Mucosa of descending colon (tissue), 3 donors: ENCODE measurements at regions of chr7 and their contacts with region 1.

Region 1: DNA sequence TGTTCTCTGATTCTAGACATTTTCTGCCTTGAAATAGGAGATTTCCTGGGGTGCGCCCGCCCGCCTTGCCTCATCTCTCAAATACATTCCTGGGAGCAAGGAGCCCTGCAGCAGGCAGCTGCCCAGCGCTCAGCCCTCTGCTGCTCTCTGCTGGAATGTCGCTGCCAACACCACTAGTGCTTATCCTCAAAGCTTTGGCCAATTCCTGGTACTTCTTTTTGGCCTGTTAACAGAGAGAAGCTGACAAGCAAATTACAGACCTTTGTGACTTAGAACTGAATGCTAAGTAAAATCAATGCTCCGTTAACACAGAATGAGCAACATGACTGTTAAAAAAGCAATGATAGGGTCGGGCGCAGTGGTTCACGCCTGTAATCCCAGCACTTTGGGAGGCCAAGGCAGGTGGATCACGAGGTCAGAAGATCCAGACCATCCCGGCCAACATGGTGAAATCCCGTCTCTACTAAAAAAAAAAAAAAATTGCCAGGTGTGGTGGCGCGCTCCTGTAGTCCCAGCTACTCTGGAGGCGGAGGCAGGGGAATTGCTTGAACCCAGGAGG is 41.9 kb upstream of the SYPL1 start:
- DNase-seq: peak; percentile 78 to 88 (median 85)
- ATAC-seq: peak; percentile 97
- H3K4me3 ChIP-seq: no peak overlapping the region
- H3K4me1 ChIP-seq: peaks cover 4% of the 10 kb centered on the region
- CTCF ChIP-seq: peak; percentile 82

Region 2: DNA sequence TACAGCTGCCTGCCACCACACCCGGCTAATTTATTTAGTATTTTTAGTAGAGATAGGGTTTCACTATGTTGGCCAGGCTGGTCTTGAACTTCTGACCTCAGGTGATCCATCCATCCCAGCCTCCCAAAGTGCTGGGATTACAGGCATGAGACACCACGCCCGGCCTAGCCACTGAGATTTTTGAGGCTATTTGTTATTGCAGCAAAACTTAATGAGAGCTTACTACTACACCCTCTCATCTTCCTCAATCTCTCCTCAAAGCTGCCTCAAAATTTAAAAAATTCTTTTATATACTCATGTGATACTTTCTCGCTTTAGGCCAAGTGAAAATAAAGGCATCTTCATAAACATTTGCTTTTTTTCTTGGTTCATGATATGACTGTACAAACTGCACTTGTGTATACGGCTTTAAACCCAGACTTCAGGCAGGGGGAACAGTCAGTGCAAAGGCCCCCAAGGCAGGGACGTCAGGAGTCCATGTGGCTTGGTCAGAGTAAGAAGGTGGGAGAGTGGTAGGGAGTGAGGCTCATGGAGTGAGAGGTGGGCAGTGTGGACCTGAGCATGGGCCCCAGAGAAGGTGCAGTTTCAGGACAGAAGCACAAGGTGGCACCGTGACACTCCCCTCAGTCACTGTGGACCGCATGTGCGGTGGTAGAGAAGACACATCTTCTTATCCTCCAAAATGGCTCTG is 97.3 kb before region 1 on chr7:
- intact Hi-C with region 1: loop called (anchors 2 kb)
- DNase-seq: peak in 2 of 3 donors; percentile 72 to 78
- ATAC-seq: peak; percentile 84
- H3K4me3 ChIP-seq: no peak overlapping the region
- H3K4me1 ChIP-seq: no peaks in the 10 kb centered on the region
- CTCF ChIP-seq: peak; percentile 79